Gastrocnemius medialis (tissue), 4 donors: ENCODE measurements at regions of chr11 and their contacts with region 1.

Region 1: GRCh38 chr11:73787643-73788537 is at the start of gene MRPL48:
- DNase-seq: peak; percentile 87 to 93
- ATAC-seq: peak; percentile 93 to 96
- H3K4me3 ChIP-seq: peak within 1 kb of the TSS; percentile 79 to 90 (median 88)
- H3K27ac ChIP-seq: peak within 1 kb of the TSS; percentile 84 to 90 (median 85)
- H3K4me1 ChIP-seq: peaks cover 8 to 16% of the 10 kb centered on the region in 2 donors
- H3K27me3 ChIP-seq: no peaks in the 10 kb centered on the region
- CTCF ChIP-seq: no peak
- POLR2A ChIP-seq: peak in 1 of 2 donors; percentile 12
- total RNA-seq, gene MRPL48: 9.0 to 29.1 (median 13.4) TPM

Region 2: DNA sequence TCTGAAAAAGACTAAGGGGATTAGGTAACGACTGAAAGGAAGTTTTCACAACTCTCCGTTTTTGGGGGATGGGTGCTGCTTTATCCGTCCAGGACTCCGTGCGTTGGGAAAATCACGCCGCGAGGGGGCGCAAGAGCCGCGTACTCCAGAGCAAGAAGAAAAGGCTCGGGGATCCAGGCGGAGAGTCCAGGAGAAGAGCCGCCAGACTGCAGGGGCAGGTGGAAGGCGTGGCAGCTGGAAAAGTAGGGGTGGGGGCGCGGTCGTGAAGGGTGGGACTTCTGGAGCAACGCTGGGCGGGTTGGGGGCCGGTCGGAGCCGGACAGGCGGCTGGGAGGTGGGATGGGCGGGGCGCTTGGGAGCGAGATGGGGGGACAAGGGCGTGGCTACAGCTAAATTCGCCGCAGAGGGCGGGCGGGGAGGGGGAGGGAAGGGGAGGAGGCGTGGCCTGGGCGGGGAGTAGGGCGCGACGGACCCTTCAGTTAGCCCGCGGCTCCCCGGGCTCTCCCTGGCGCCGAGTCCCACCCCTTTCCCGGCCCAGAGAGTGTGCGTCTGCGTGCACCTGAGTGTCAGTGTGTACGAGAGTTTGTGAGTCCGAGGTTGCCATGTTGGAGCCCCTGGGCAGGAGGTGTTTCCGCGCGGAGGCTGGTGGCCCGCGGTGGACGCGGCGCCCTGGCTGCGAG is 480.4 kb before region 1 on chr11:
- in situ Hi-C with region 1: no loop called
- intact Hi-C with region 1: no loop called
- DNase-seq: peak; percentile 88 to 92
- ATAC-seq: peak; percentile 80 to 82
- H3K4me3 ChIP-seq: peak overlapping the region; percentile 65 to 90 (median 79)
- H3K27ac ChIP-seq: peak overlapping the region; percentile 73 to 83 (median 82)
- H3K4me1 ChIP-seq: peaks cover 4 to 18% of the 10 kb centered on the region in 2 donors
- H3K27me3 ChIP-seq: peaks cover 0 to 2% (median 0%) of the 10 kb centered on the region in 3 donors
- CTCF ChIP-seq: peak; percentile 82 to 93 (median 91)
- POLR2A ChIP-seq: peak; percentile 29 to 39

Region 3: DNA sequence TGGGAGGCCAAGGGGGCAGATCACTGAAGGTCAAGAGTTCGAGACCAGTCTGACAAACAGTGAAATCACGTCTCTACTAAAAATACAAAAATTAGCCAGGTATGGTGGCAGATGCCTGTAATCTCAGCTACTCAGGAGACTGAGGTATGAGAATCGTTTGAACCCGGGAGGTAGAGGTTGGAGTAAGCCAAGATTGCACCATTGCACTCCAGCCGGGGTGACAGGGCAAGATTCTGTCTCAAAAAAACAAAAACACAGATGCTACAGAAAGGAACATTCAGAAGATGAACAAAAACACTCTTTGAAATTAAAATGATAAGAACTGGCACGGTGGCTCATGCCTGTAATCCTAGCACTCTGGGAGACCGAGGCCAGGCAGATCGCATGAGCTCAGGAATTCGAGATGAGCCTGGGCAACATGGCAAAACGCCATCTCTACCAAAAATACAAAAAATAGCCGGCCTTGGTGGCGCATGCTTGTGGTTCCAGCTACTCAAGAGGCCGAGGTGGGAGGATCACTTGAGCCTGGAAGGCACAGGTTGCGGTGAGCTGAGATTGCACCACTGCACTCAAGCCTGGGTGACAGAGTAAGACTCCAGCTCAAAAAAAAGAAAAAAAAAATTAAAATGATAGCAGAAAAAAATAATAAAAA is 35.5 kb before region 1 on chr11:
- in situ Hi-C with region 1: no loop called
- intact Hi-C with region 1: loop called (anchors 5 kb)
- DNase-seq: no peak
- ATAC-seq: peak in 1 of 2 donors; percentile 26
- H3K4me3 ChIP-seq: no peak overlapping the region
- H3K27ac ChIP-seq: no peak overlapping the region
- H3K4me1 ChIP-seq: peaks cover 14 to 15% of the 10 kb centered on the region in 2 donors
- H3K27me3 ChIP-seq: no peaks in the 10 kb centered on the region
- CTCF ChIP-seq: no peak
- POLR2A ChIP-seq: no peak